ENCODE measurements at regions of chr6 and their contacts with region 1.

Region 1: DNA sequence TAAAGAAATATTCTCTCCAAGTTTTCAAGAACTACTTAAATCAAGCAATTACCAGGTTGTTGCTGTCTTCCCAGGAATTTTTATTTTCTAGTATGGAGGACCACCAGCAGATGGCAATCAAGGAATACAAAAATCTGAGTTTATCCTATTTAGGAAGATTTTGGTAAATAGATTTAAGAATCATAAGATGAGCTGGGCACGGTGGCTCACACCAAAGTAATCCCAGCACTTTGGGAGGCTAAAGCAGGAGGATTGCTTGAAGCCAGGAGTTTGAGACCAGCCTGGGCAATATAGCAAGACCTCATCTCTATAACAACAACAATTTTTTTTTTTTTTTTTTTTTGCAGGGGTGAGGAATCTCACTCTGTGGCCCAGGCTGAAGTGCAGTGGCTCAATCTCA is 19.3 kb upstream of the SEC63 start:
- DNase-seq: no peak

Region 2: GRCh38 chr6:108526739-108527174 is 549.5 kb after region 1 on chr6:
- intact Hi-C with region 1: loop called (anchors 10 kb)
- DNase-seq: no peak

Measured in cardiac septum (tissue), 1 donor.